ENCODE measurements at regions of chr6 and their contacts with region 1.

Region 1: GRCh38 chr6:96542702-96543101 is 20.2 kb upstream of the FHL5 start:
- DNase-seq: no peak
- ATAC-seq: peak; percentile 79
- H3K4me3 ChIP-seq: no peak overlapping the region
- H3K27ac ChIP-seq: no peak overlapping the region
- H3K4me1 ChIP-seq: no peaks in the 10 kb centered on the region
- H3K27me3 ChIP-seq: no peaks in the 10 kb centered on the region
- CTCF ChIP-seq: peak; percentile 26 to 45 (median 31); a peak in 4 of 6 replicates
- EP300 ChIP-seq: no peak
- POLR2A ChIP-seq: no peak
- RAD21 ChIP-seq: peak; percentile 61

Region 2: GRCh38 chr6:96532399-96532798 is 10.3 kb before region 1 on chr6:
- CTCF ChIA-PET with region 1: interaction called, 16 read pairs
- POLR2A ChIA-PET with region 1: interaction called, 4 read pairs
- RAD21 ChIA-PET with region 1: interaction called, 9 read pairs
- SMC1A ChIA-PET with region 1: interaction called, 27 read pairs
- in situ Hi-C with region 1: no loop called
- intact Hi-C with region 1: no loop called
- DNase-seq: peak; percentile 41
- ATAC-seq: peak; percentile 61
- H3K4me3 ChIP-seq: no peak overlapping the region
- H3K27ac ChIP-seq: peak overlapping the region; percentile 50
- H3K4me1 ChIP-seq: no peaks in the 10 kb centered on the region; the same call in 1 of the 2 replicates
- H3K27me3 ChIP-seq: no peaks in the 10 kb centered on the region
- CTCF ChIP-seq: no peak
- EP300 ChIP-seq: no peak
- POLR2A ChIP-seq: no peak
- RAD21 ChIP-seq: no peak

Region 3: GRCh38 chr6:96554559-96554958 is 11.9 kb after region 1 on chr6:
- CTCF ChIA-PET with region 1: interaction called, 10 read pairs
- POLR2A ChIA-PET with region 1: no interaction called
- RAD21 ChIA-PET with region 1: interaction called, 11 read pairs
- SMC1A ChIA-PET with region 1: interaction called, 7 read pairs
- in situ Hi-C with region 1: no loop called
- intact Hi-C with region 1: no loop called
- DNase-seq: no peak
- ATAC-seq: no peak
- H3K4me3 ChIP-seq: no peak overlapping the region
- H3K27ac ChIP-seq: no peak overlapping the region
- H3K4me1 ChIP-seq: no peaks in the 10 kb centered on the region
- H3K27me3 ChIP-seq: no peaks in the 10 kb centered on the region
- CTCF ChIP-seq: no peak
- EP300 ChIP-seq: no peak
- POLR2A ChIP-seq: no peak
- RAD21 ChIP-seq: no peak

Region 4: GRCh38 chr6:96604420-96604819 is 61.7 kb after region 1 on chr6:
- CTCF ChIA-PET with region 1: interaction called, 4 read pairs
- POLR2A ChIA-PET with region 1: no interaction called
- RAD21 ChIA-PET with region 1: no interaction called
- SMC1A ChIA-PET with region 1: interaction called, 10 read pairs
- in situ Hi-C with region 1: no loop called
- intact Hi-C with region 1: no loop called
- DNase-seq: no peak
- ATAC-seq: peak; percentile 72
- H3K4me3 ChIP-seq: no peak overlapping the region
- H3K27ac ChIP-seq: no peak overlapping the region
- H3K4me1 ChIP-seq: peaks cover 2% of the 10 kb centered on the region; the same call in 1 of the 2 replicates
- H3K27me3 ChIP-seq: no peaks in the 10 kb centered on the region
- CTCF ChIP-seq: no peak
- EP300 ChIP-seq: no peak
- POLR2A ChIP-seq: no peak
- RAD21 ChIP-seq: no peak

Region 5: GRCh38 chr6:96611342-96611991 is 68.8 kb after region 1 on chr6:
- CTCF ChIA-PET with region 1: interaction called, 7 read pairs
- POLR2A ChIA-PET with region 1: no interaction called
- RAD21 ChIA-PET with region 1: interaction called, 7 read pairs
- SMC1A ChIA-PET with region 1: interaction called, 11 read pairs
- in situ Hi-C with region 1: no loop called
- intact Hi-C with region 1: loop called (anchors 5 kb)
- DNase-seq: no peak
- ATAC-seq: peak; percentile 86
- H3K4me3 ChIP-seq: no peak overlapping the region
- H3K27ac ChIP-seq: 0 out of 2 replicates have a peak overlapping the region, but pooled peaks have one; percentile 4
- H3K4me1 ChIP-seq: peaks cover 34% of the 10 kb centered on the region
- H3K27me3 ChIP-seq: no peaks in the 10 kb centered on the region
- CTCF ChIP-seq: no peak
- EP300 ChIP-seq: peak; percentile 75 to 88; a peak in 3 of 4 replicates
- POLR2A ChIP-seq: no peak
- RAD21 ChIP-seq: no peak

Region 6: GRCh38 chr6:96760153-96760687 is 217.5 kb after region 1 on chr6:
- CTCF ChIA-PET with region 1: interaction called, 4 read pairs
- POLR2A ChIA-PET with region 1: no interaction called
- RAD21 ChIA-PET with region 1: interaction called, 4 read pairs
- SMC1A ChIA-PET with region 1: no interaction called
- in situ Hi-C with region 1: no loop called
- intact Hi-C with region 1: loop called (anchors 2 kb)
- DNase-seq: no peak
- ATAC-seq: peak; percentile 51
- H3K4me3 ChIP-seq: no peak overlapping the region
- H3K27ac ChIP-seq: no peak overlapping the region
- H3K4me1 ChIP-seq: no peaks in the 10 kb centered on the region
- H3K27me3 ChIP-seq: no peaks in the 10 kb centered on the region
- CTCF ChIP-seq: peak in 1 of 3 experiments; percentile 27; a peak in 1 of 6 replicates
- EP300 ChIP-seq: no peak
- POLR2A ChIP-seq: no peak
- RAD21 ChIP-seq: 0 out of 2 replicates have a peak, but pooled peaks have one; percentile 22

Measured in GM12878 (cell line).